Adrenal gland (tissue), 19 donors: ENCODE measurements at regions of chr15 and their contacts with region 1.

Region 1: GRCh38 chr15:74322181-74323076 is 45.0 kb downstream of the CYP11A1 start:
- DNase-seq: peak; percentile 71 to 87 (median 83)
- H3K4me3 ChIP-seq: no peak overlapping the region
- H3K27ac ChIP-seq: peak overlapping the region in 1 of 5 donors; percentile 26
- H3K4me1 ChIP-seq: peaks cover 19 to 36% of the 10 kb centered on the region in 2 donors
- H3K27me3 ChIP-seq: no peaks in the 10 kb centered on the region
- CTCF ChIP-seq: peak; percentile 59 to 91 (median 84)
- POLR2A ChIP-seq: no peak

Region 2: GRCh38 chr15:74127260-74127953 is 195.0 kb before region 1 on chr15:
- intact Hi-C with region 1: loop called in 1 of 2 experiments (anchors 5 kb)
- DNase-seq: peak; percentile 82 to 94 (median 92)
- H3K4me3 ChIP-seq: peak overlapping the region in 1 of 4 donors; percentile 45
- H3K27ac ChIP-seq: no peak overlapping the region
- H3K4me1 ChIP-seq: peaks cover 0 to 11% of the 10 kb centered on the region in 2 donors
- H3K27me3 ChIP-seq: peaks cover 50% of the 10 kb centered on the region
- CTCF ChIP-seq: peak; percentile 89 to 99 (median 98)
- POLR2A ChIP-seq: no peak